HCT116 (cell line): ENCODE measurements at regions of chr6 and their contacts with region 1.

Region 1: GRCh38 chr6:86937219-86938079 is at the start of gene HTR1E:
- DNase-seq: peak; percentile 4
- ATAC-seq: peak; percentile 91
- H3K4me3 ChIP-seq: no peak within 1 kb of the TSS
- H3K27ac ChIP-seq: no peak within 1 kb of the TSS
- H3K4me1 ChIP-seq: no peaks in the 10 kb centered on the region
- H3K27me3 ChIP-seq: peaks cover 30% of the 10 kb centered on the region
- CTCF ChIP-seq: peak; percentile 12 to 66 (median 55); a peak in 4 of 6 replicates
- POLR2A ChIP-seq: no peak
- RAD21 ChIP-seq: peak; percentile 54
- total RNA-seq, gene HTR1E: not detected

Region 2: GRCh38 chr6:85756982-85757381 is 1180.5 kb before region 1 on chr6:
- CTCF ChIA-PET with region 1: interaction called, 3 read pairs
- POLR2A ChIA-PET with region 1: no interaction called
- RAD21 ChIA-PET with region 1: no interaction called
- intact Hi-C with region 1: loop called (anchors 5 kb)
- DNase-seq: peak; percentile 22
- ATAC-seq: no peak
- H3K4me3 ChIP-seq: no peak overlapping the region
- H3K27ac ChIP-seq: no peak overlapping the region
- H3K4me1 ChIP-seq: no peaks in the 10 kb centered on the region
- H3K27me3 ChIP-seq: no peaks in the 10 kb centered on the region
- CTCF ChIP-seq: peak; percentile 26 to 52 (median 48); a peak in 4 of 6 replicates
- POLR2A ChIP-seq: no peak
- RAD21 ChIP-seq: peak; percentile 72

Region 3: DNA sequence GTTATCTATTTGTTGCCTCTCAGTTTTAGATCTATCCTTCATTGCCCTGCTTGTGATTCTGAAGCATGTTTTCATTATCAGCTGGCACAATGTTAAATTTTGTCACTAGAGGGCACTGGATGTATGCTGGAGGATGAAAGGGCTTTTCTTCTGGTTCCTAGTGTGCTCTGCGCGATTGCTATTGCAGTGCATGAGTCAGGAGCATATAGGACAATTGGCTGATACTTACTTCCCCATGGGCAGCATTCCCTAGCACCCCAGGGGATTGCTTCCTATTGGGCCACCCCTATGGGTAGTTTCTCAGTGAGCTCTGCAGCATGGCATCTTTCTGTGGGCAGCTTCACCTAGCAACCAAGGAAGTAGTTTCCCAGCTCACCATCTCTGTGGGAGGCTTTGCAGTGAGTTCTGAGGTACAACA is 1014.4 kb before region 1 on chr6:
- CTCF ChIA-PET with region 1: interaction called, 4 read pairs
- POLR2A ChIA-PET with region 1: no interaction called
- RAD21 ChIA-PET with region 1: no interaction called
- intact Hi-C with region 1: loop called (anchors 2 kb)
- DNase-seq: peak; percentile 22
- ATAC-seq: peak; percentile 86
- H3K4me3 ChIP-seq: no peak overlapping the region
- H3K27ac ChIP-seq: no peak overlapping the region
- H3K4me1 ChIP-seq: no peaks in the 10 kb centered on the region
- H3K27me3 ChIP-seq: peaks cover 3% of the 10 kb centered on the region; the same call in 1 of the 2 replicates
- CTCF ChIP-seq: peak; percentile 61 to 76 (median 62); a peak in 5 of 6 replicates
- POLR2A ChIP-seq: no peak
- RAD21 ChIP-seq: peak; percentile 80

Region 4: DNA sequence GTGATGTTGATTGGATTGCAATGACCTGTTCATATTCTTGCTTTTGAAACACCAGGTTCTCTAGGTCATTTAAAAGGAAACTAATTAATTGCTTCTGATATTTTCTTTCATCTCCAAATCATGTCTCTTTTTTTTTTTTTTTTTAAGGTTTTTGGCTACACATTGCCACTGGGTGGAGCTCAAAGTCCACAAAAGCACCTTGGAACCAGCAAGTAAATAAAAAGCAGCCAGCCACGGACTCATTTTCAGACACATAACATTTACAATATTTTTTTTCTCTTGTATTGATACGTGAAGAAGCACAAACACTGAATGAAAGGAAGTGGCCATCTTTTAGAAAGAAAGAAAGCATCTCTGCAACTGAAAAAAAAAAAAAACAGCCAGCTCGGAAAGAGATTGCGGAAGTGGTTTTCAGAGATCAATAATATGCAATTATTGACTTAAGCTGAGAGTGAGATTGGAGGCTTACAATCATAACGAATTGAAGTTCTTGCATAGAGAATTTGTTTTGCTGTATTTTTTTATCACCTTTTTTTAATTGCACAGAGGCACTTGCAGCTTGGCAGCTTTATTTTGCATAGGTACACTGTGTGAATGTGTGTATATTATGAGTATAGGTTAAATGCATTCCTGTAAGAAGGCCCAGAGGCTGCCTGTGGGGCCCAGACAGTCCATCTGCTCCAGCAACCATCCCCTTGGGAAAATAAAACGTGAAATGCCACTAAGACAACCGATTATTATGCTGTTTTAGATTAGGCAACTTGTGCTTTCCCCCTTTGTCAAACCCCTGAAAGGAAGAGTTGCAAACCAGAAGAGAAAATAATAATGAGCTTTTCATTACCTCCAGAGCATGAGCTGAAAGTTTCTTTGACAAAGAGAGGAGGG is 129.2 kb after region 1 on chr6:
- CTCF ChIA-PET with region 1: no interaction called
- POLR2A ChIA-PET with region 1: no interaction called
- RAD21 ChIA-PET with region 1: no interaction called
- intact Hi-C with region 1: no loop called
- DNase-seq: peak; percentile 57
- ATAC-seq: no peak
- H3K4me3 ChIP-seq: no peak overlapping the region
- H3K27ac ChIP-seq: no peak overlapping the region
- H3K4me1 ChIP-seq: no peaks in the 10 kb centered on the region
- H3K27me3 ChIP-seq: peaks cover 20% of the 10 kb centered on the region
- CTCF ChIP-seq: peak; percentile 38 to 78 (median 56); a peak in 4 of 6 replicates
- POLR2A ChIP-seq: no peak
- RAD21 ChIP-seq: peak; percentile 80